ENCODE measurements at regions of chr5 and their contacts with region 1.

Region 1: GRCh38 chr5:75053304-75054133 is 1.2 kb upstream of the GCNT4 start:
- DNase-seq: peak; percentile 71
- H3K4me3 Mint-ChIP-seq: peak overlapping the region; percentile 88
- H3K27ac Mint-ChIP-seq: peak overlapping the region; percentile 92
- H3K4me1 Mint-ChIP-seq: peaks cover 81% of the 10 kb centered on the region
- H3K27me3 Mint-ChIP-seq: peaks cover 10% of the 10 kb centered on the region

Region 2: DNA sequence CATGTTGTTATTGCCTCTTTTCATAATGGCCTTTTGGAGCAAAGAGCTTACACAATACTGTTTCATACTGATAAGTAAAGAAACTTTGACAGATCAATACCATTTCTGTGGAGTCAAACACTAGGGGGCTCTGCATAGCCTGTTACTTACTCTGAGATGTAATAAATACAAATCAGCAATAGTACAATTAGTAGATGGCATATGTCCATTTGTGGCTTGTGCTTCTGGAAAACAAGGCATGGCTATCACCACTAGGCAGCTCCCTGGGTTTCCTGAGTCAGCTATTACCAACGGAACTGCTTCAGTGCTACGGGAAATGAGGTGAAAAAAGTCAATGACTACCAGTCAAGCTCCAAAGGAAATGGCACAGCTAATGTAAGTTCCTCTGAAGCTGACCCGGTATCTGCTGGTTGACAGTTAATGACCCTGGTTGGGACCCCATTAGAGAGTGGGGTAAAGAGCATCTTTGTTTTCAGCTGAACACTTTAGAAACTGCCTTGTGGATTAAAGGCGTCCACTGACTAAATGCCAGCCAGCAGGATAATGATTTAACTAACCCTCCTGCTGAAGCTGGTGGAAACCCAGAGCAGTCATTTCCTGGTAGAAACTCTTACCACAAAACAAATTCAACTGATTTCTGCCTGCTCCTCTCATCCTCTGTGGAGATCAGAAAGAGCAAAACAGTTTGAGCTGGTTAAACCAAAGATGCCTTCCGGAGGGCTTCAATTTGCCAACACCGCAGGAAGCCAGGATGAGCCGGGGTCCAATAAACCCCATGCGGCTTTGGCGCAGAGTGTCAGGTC is 118.4 kb before region 1 on chr5:
- CTCF ChIA-PET with region 1: interaction called, 11 read pairs
- DNase-seq: peak; percentile 36
- H3K4me3 Mint-ChIP-seq: peak overlapping the region; percentile 49
- H3K27ac Mint-ChIP-seq: peak overlapping the region; percentile 89
- H3K4me1 Mint-ChIP-seq: peaks cover 37% of the 10 kb centered on the region
- H3K27me3 Mint-ChIP-seq: no peaks in the 10 kb centered on the region

Region 3: GRCh38 chr5:75034137-75034750 is 19.3 kb before region 1 on chr5:
- CTCF ChIA-PET with region 1: interaction called, 11 read pairs
- DNase-seq: peak; percentile 68
- H3K4me3 Mint-ChIP-seq: no peak overlapping the region
- H3K27ac Mint-ChIP-seq: peak overlapping the region; percentile 81
- H3K4me1 Mint-ChIP-seq: peaks cover 44% of the 10 kb centered on the region
- H3K27me3 Mint-ChIP-seq: no peaks in the 10 kb centered on the region

Measured in activated naive CD4-positive, alpha-beta T cell treated with anti-CD3 and anti-CD28 coated beads, Interleukin-2, amount 10 ng/mL, durations not matched to agents 7 days and 5 days (primary cell).